Dorsolateral prefrontal cortex (tissue), 120 donors: ENCODE measurements at regions of chr3 and their contacts with region 1.

Region 1: GRCh38 chr3:11021611-11022011 is 29.1 kb downstream of the SLC6A1 start:
- DNase-seq: peak in 9 of 10 donors; percentile 57 to 75 (median 65)
- H3K4me3 ChIP-seq: no peak overlapping the region
- H3K27ac ChIP-seq: peak overlapping the region; percentile 48 to 96 (median 87)
- H3K27me3 ChIP-seq: no peaks in the 10 kb centered on the region
- CTCF ChIP-seq: peak in 55 of 56 donors; percentile 37 to 91 (median 69)

Region 2: DNA sequence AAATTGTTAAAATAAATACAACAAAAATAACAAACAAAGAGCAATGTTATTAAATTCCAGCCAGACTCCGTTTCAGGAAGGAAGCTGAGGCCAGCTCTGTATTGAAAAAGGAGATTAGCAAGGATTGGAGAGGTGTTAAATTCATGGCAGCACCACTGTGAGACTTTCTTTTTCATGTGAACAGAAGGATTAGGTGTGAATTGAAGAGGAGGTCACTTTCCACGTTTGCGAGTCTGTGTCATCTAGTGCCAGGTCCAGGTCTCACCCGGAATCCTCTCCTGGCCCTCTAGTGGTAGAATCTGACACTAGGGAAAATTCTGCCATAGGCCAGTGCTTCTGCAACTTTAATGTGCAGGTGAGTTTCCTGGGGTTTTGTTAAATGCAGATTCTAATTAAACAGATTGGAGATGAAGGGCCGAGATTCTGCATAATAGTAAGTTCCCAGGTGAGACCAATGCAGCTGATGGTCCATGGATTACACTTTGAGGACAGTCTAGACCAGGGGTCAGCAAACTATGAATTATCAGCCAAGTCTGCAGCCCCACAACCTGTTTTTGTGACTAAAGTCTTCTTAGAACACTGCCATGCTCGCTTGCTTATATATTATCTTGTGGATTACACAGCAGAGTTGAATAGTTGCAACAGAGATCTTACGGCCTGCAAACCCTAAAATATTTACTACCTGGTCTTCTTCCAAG is 38.2 kb before region 1 on chr3:
- intact Hi-C with region 1: loop called in 1 of 2 experiments (anchors 5 kb)
- DNase-seq: peak in 3 of 10 donors; percentile 46 to 58 (median 52)
- H3K4me3 ChIP-seq: peak overlapping the region in 35 of 59 donors; percentile 7 to 54 (median 28)
- H3K27ac ChIP-seq: peak overlapping the region in 43 of 59 donors; percentile 10 to 86 (median 57)
- H3K27me3 ChIP-seq: no peaks in the 10 kb centered on the region
- CTCF ChIP-seq: peak; percentile 66 to 95 (median 86)